Dendritic cell treated with granulocyte-macrophage colony-stimulating factor and Interleukin-4, amounts not matched to agents 40 ng/mL and 50 ng/mL, for 4 days (primary cell): ENCODE measurements at regions of chr10 and their contacts with region 1.

Region 1: DNA sequence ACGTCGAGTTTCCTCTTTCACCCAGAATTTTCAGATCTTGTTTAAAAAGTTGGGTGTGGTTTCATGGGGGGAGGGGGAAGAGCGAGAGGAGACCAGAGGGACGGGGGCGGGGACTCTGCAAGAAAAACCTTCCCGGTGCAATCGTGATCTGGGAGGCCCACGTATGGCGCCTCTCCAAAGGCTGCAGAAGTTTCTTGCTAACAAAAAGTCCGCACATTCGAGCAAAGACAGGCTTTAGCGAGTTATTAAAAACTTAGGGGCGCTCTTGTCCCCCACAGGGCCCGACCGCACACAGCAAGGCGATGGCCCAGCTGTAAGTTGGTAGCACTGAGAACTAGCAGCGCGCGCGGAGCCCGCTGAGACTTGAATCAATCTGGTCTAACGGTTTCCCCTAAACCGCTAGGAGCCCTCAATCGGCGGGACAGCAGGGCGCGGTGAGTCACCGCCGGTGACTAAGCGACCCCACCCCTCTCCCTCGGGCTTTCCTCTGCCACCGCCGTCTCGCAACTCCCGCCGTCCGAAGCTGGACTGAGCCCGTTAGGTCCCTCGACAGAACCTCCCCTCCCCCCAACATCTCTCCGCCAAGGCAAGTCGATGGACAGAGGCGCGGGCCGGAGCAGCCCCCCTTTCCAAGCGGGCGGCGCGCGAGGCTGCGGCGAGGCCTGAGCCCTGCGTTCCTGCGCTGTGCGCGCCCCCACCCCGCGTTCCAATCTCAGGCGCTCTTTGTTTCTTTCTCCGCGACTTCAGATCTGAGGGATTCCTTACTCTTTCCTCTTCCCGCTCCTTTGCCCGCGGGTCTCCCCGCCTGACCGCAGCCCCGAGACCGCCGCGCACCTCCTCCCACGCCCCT is at the start of gene VIM:
- H3K4me3 Mint-ChIP-seq: peak within 1 kb of the TSS; percentile 93
- H3K27ac Mint-ChIP-seq: peak within 1 kb of the TSS; percentile 100
- H3K4me1 Mint-ChIP-seq: peaks cover 44% of the 10 kb centered on the region
- H3K27me3 Mint-ChIP-seq: no peaks in the 10 kb centered on the region

Region 2: DNA sequence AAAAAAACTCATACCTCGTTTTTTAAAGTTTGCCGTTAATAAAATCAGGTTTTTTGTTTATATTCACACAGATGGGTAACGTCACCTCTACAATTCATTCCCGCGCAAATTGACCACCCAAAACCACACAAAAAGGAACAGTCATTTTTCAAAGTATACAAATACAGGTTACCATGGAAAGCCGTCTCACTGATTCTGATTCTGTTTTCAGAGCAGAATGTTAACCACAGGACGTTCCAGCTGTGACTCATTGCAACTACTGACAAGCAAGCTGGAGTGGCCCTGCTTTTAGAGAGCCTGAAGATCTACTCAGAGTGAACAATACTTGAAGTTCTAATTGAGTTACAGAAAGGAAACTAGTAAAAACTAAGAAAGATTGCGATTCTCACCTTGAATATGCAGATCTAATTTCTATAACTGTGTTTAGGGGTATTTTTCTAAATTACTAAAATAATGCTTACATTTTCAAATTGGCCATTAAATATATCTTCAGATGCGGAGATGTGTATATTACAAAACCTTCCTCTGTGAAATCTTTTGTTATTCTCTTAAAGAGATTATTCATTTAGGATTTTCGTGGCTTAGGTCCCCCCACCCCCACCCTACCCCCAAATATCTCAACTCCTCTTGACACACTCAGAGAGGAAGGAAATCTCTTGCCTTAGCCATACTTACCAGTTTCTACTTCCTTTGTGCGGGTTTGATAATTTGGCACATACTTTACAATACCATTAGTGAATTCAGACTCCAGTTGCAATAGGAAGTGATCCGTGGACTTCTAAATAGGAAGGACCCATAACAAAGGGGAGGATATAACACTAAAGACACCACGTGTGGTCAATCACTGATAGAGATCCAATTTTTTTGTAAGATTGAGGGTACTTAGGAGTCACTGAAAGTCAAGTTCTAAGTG is 204.7 kb before region 1 on chr10:
- intact Hi-C with region 1: loop called (anchors 2 kb)
- H3K4me3 Mint-ChIP-seq: peak overlapping the region; percentile 11
- H3K27ac Mint-ChIP-seq: peak overlapping the region; percentile 83
- H3K4me1 Mint-ChIP-seq: peaks cover 26% of the 10 kb centered on the region
- H3K27me3 Mint-ChIP-seq: no peaks in the 10 kb centered on the region

Region 3: DNA sequence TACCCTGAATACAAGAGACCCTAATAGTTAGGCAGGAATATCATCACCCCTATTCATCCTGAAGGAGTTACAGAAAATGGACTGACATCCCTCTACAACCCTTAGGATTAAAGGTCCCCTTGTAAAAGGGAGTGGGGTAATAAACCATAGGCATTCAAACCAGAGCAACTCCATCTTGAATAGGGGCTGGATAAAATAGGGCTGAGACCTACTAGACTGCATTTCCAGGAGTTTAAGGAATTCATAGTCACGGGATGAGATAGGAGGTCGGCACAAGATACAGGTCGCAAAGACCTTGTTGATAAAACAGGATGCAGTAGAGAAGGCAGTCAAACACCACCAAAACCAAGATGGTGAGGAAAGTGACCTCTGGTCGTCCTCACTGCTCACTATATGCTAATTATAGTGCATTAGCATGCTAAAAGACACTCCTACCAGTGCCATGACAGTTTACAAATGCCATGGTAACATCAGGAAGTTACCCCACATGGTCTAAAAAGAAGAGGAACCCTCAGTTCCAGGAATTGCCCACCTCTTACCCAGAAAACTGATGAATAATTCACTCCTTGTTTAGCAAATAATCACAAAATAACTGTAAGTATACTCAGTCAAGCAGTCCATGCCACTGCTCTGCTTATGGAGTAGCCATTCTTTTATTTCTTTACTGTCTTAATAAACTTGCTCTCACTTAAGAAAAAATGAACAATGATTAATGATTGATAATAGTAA is 135.9 kb before region 1 on chr10:
- intact Hi-C with region 1: loop called (anchors 10 kb)
- H3K4me3 Mint-ChIP-seq: no peak overlapping the region
- H3K27ac Mint-ChIP-seq: peak overlapping the region; percentile 88
- H3K4me1 Mint-ChIP-seq: peaks cover 42% of the 10 kb centered on the region
- H3K27me3 Mint-ChIP-seq: no peaks in the 10 kb centered on the region

Region 4: DNA sequence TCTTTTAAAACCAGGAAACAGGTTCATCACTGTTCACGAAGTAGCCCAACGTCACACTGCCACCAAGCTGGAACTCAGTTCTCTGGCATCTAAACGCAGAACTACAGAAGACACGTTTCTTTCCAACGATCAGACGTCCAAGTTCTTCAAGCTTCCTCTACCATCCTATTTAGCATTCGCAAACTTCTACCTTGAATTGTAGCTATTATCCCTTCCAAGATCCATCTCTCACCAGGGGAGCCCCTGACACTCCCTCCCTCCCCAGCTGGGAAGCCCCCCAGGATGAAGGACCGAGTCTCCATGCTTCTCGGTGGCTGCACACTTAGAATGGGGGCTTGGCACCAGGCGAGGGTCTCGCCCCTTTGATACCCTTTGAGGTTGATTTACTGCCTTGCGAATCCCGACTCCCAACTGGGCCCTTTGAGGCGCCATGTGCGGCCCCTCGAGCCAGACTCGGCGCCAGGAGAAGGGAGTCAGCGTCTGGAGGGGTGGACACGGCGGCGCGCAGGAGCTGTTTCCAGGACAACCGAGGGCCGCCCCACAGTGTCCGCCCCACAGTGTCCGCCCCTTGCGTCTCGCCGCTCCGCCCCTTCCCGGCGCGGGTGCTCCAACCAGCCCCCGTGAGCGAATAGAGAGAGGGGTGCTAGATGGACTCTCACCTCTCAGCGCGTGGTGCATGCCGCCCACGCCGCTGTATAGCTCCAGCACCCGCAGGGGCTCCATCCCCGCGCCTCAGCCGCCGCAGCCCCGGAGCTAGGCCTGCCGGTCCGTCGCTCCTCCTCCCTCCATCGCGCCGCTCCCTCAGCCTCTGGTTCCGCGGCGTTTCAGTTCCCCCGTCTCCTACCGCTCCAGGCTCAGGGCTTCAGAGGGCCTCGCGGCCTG is 27.2 kb before region 1 on chr10 and contains the start of gene TRDMT1:
- intact Hi-C with region 1: loop called (anchors 1 kb)
- H3K4me3 Mint-ChIP-seq: peak within 1 kb of the TSS; percentile 96
- H3K27ac Mint-ChIP-seq: peak within 1 kb of the TSS; percentile 99
- H3K4me1 Mint-ChIP-seq: peaks cover 57% of the 10 kb centered on the region
- H3K27me3 Mint-ChIP-seq: no peaks in the 10 kb centered on the region

Region 5: GRCh38 chr10:17216217-17216900 is 12.0 kb before region 1 on chr10:
- intact Hi-C with region 1: loop called (anchors 1 kb)
- H3K4me3 Mint-ChIP-seq: no peak overlapping the region
- H3K27ac Mint-ChIP-seq: peak overlapping the region; percentile 96
- H3K4me1 Mint-ChIP-seq: peaks cover 59% of the 10 kb centered on the region
- H3K27me3 Mint-ChIP-seq: no peaks in the 10 kb centered on the region

Region 6: GRCh38 chr10:18005781-18006456 is 777.6 kb after region 1 on chr10:
- intact Hi-C with region 1: no loop called
- H3K4me3 Mint-ChIP-seq: no peak overlapping the region
- H3K27ac Mint-ChIP-seq: no peak overlapping the region
- H3K4me1 Mint-ChIP-seq: no peaks in the 10 kb centered on the region
- H3K27me3 Mint-ChIP-seq: peaks cover 4% of the 10 kb centered on the region